ENCODE measurements at regions of chr5 and their contacts with region 1.

Region 1: DNA sequence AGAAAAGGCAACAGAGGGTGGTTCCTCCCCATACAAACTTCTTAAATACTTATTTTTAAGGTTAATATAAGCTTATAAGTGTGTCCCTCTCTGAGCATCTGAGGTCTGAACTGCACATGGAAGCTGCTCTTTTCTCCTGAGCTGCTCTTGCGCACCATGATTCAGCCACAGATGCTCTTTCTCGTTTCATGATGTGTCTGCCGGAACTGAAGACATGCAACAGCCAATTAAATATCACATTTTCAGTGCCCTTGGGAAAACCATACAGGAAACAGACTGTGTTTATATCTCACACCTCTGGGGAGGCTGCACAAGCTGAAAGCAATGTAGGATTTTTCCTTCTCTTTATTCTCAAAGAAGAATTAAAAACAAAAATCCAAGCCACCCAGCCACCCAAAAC is 96.8 kb upstream of the NREP start:
- DNase-seq: peak; percentile 17
- CTCF ChIP-seq: no peak

Region 2: GRCh38 chr5:111703662-111704061 is 150.1 kb before region 1 on chr5:
- CTCF ChIA-PET with region 1: no interaction called
- POLR2A ChIA-PET with region 1: no interaction called
- DNase-seq: peak; percentile 58
- CTCF ChIP-seq: no peak

Region 3: DNA sequence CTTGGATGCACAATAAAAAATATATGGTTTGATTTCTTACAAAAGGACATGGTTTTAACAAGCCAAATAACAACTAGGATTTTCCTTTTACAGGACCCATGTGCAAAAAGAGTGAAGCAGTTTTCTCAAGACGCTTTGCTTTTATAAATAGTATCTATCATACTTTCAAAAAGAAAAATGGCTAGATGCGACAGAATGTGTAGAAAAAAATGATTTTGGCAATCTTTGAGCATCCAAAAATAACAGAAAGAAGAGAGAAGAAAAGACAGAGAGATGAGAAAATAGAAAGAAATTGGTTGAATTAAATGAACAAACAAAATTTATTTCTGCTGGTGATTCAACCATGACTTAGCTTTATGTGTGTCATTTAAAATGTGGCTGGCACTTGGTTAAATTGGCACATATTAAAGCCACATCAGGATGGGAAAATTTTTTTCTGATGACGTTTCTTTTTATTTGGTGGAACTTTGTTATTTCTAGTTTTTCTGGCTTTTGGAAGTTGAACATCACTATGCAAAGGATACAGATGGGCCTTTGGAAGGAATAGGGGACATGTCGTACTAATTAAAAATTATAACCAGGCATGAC is 61.2 kb before region 1 on chr5:
- CTCF ChIA-PET with region 1: no interaction called
- POLR2A ChIA-PET with region 1: no interaction called
- DNase-seq: no peak
- CTCF ChIP-seq: no peak

Region 4: DNA sequence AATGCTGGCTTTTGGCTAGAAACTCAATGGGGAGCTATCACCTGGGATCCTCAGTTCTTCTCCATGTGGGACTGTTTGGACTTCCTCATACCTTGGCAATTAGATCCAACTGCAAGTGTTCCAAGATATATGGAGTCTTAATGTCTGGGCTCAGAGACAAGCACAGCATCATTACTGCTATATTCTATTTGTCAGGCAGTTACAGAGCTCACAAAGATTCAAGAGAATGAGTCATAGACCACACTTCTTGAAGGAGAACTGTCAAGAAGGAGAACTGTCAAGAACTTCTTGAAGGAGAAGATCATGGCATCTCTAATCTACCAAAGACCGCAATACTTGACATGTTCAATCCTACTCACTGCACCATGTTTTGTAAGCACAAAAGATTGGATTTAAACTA is 10.1 kb after region 1 on chr5:
- CTCF ChIA-PET with region 1: interaction called, 18 read pairs
- POLR2A ChIA-PET with region 1: no interaction called
- DNase-seq: no peak
- CTCF ChIP-seq: no peak

Region 5: DNA sequence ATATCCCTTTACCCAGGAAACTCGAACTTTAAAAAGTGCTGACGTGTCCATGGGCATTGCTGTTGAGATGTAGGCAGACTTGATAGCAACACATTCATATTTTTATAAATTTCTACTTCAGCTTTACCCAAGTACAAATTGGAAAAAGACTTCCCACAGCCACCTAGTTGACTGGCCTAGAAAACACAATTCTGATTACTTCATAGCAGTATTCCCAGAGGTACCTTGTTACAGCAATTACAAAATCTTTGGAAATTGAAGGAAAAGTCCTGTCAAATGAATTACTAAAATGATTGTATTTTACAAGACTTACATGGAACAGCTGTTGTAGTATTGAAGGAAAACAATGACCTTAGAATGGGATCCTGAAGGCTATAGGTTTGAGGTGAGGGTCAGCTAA is 34.0 kb after region 1 on chr5:
- CTCF ChIA-PET with region 1: no interaction called
- POLR2A ChIA-PET with region 1: no interaction called
- DNase-seq: no peak
- CTCF ChIP-seq: no peak

Region 6: DNA sequence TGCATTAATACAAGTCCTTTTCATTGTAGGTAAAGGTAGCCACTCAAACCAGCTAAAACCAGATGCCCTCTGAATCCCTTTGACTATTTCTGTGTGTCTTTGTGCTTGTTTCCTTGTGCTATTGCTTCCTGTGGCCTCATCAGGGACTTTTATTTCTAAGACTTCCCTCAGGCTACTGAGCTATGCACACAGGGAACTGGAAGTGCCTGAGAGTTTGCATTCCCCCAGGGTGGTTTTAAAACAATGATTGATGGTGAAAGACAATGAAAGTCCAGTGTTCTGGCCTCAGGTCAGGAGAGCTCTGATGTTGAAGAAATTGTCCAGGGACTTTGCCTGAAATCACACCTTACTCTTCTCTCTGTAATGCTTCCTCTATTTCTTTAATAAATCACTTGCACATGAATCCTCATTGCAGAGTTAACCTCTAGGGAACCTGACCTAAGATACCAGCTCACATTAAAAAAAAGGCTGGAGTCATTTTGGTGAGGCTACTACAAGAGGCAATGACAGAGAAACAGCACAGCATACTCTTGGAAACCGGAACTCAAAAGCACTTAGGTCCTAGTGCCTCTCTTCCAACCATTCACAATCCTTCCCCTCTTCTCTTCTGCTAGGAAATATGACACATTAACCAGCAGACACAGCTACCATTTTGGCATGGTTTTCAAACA is 61.4 kb after region 1 on chr5:
- CTCF ChIA-PET with region 1: no interaction called
- POLR2A ChIA-PET with region 1: no interaction called
- DNase-seq: no peak
- CTCF ChIP-seq: no peak

Measured in GM10248 (cell line).